Activated CD8-positive, alpha-beta T cell treated with anti-CD3 and anti-CD28 coated beads for 36 hours (primary cell): ENCODE measurements at regions of chr2 and their contacts with region 1.

Region 1: DNA sequence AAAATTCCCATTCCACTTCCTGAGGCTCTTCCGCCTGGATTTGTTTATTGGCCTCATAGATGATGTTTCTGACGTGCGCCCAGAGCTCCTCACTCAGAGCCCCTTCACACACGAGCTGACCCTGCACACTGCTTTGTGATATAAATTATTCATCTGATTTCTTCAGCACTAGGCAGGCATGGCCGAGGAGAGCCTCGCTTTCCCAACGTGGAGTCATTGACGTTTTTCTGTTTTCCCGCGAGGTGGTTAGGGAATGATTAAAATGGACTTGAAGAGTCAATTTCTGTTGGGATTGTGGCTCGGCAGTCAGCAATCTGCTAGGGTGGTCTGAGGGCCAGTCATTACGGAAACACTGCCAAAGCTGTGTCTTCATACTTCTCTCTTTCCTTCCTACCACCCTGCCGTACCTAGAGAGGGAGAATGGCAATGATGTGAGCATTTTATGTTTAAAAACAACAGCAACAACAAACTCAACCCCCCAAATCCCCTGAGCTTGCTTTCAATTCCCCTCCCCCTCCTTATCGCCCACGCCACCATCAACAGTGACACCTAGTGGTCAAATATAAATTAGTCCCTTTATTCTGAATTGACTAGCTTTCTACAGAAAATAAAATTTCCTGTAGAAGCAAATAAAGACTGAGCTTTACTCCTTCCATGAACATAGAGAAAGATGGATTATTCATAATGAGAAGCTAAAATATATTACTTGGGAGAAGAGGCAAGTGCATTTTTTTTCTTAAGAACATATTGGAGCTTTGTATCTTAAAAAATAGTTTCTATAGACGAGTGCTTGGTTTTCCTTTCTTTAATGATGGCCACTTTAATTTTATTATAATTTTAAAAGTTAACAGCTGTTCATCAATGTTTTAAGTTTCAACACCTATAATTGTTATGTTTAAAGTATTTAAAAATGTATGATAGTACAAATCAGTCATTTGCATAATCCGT is 285.1 kb downstream of the MTX2 start:
- DNase-seq: peak; percentile 49
- ATAC-seq: peak; percentile 65
- H3K4me3 Mint-ChIP-seq: peak overlapping the region; percentile 77
- H3K27ac Mint-ChIP-seq: peak overlapping the region; percentile 67
- H3K4me1 Mint-ChIP-seq: peaks cover 7% of the 10 kb centered on the region
- H3K27me3 Mint-ChIP-seq: peaks cover 46% of the 10 kb centered on the region
- CTCF ChIP-seq: peak; percentile 85

Region 2: GRCh38 chr2:176140513-176141317 is 413.7 kb before region 1 on chr2:
- CTCF ChIA-PET with region 1: interaction called, 18 read pairs
- POLR2A ChIA-PET with region 1: no interaction called
- intact Hi-C with region 1: loop called (anchors 5 kb)
- DNase-seq: peak; percentile 76
- ATAC-seq: peak; percentile 94
- H3K4me3 Mint-ChIP-seq: peak overlapping the region; percentile 56
- H3K27ac Mint-ChIP-seq: no peak overlapping the region
- H3K4me1 Mint-ChIP-seq: peaks cover 23% of the 10 kb centered on the region
- H3K27me3 Mint-ChIP-seq: peaks cover 68% of the 10 kb centered on the region
- CTCF ChIP-seq: peak; percentile 94

Region 3: GRCh38 chr2:176392249-176392648 is 162.1 kb before region 1 on chr2:
- CTCF ChIA-PET with region 1: no interaction called
- POLR2A ChIA-PET with region 1: no interaction called
- intact Hi-C with region 1: no loop called
- DNase-seq: no peak
- ATAC-seq: no peak
- H3K4me3 Mint-ChIP-seq: no peak overlapping the region
- H3K27ac Mint-ChIP-seq: no peak overlapping the region
- H3K4me1 Mint-ChIP-seq: no peaks in the 10 kb centered on the region
- H3K27me3 Mint-ChIP-seq: peaks cover 18% of the 10 kb centered on the region
- CTCF ChIP-seq: no peak

Region 4: GRCh38 chr2:176526995-176527901 is 27.1 kb before region 1 on chr2:
- CTCF ChIA-PET with region 1: interaction called, 12 read pairs
- POLR2A ChIA-PET with region 1: no interaction called
- intact Hi-C with region 1: no loop called
- DNase-seq: no peak
- ATAC-seq: no peak
- H3K4me3 Mint-ChIP-seq: no peak overlapping the region
- H3K27ac Mint-ChIP-seq: no peak overlapping the region
- H3K4me1 Mint-ChIP-seq: no peaks in the 10 kb centered on the region
- H3K27me3 Mint-ChIP-seq: peaks cover 26% of the 10 kb centered on the region
- CTCF ChIP-seq: no peak

Region 5: GRCh38 chr2:176565641-176566323 is 11.4 kb after region 1 on chr2:
- CTCF ChIA-PET with region 1: interaction called, 20 read pairs
- POLR2A ChIA-PET with region 1: no interaction called
- intact Hi-C with region 1: no loop called
- DNase-seq: no peak
- ATAC-seq: no peak
- H3K4me3 Mint-ChIP-seq: no peak overlapping the region
- H3K27ac Mint-ChIP-seq: no peak overlapping the region
- H3K4me1 Mint-ChIP-seq: no peaks in the 10 kb centered on the region
- H3K27me3 Mint-ChIP-seq: peaks cover 42% of the 10 kb centered on the region
- CTCF ChIP-seq: no peak

Region 6: GRCh38 chr2:176582990-176583481 is 28.7 kb after region 1 on chr2:
- CTCF ChIA-PET with region 1: interaction called, 11 read pairs
- POLR2A ChIA-PET with region 1: no interaction called
- intact Hi-C with region 1: no loop called
- DNase-seq: no peak
- ATAC-seq: peak; percentile 56
- H3K4me3 Mint-ChIP-seq: no peak overlapping the region
- H3K27ac Mint-ChIP-seq: no peak overlapping the region
- H3K4me1 Mint-ChIP-seq: peaks cover 5% of the 10 kb centered on the region
- H3K27me3 Mint-ChIP-seq: peaks cover 32% of the 10 kb centered on the region
- CTCF ChIP-seq: no peak